ENCODE measurements at regions of chr2 and their contacts with region 1.

Region 1: DNA sequence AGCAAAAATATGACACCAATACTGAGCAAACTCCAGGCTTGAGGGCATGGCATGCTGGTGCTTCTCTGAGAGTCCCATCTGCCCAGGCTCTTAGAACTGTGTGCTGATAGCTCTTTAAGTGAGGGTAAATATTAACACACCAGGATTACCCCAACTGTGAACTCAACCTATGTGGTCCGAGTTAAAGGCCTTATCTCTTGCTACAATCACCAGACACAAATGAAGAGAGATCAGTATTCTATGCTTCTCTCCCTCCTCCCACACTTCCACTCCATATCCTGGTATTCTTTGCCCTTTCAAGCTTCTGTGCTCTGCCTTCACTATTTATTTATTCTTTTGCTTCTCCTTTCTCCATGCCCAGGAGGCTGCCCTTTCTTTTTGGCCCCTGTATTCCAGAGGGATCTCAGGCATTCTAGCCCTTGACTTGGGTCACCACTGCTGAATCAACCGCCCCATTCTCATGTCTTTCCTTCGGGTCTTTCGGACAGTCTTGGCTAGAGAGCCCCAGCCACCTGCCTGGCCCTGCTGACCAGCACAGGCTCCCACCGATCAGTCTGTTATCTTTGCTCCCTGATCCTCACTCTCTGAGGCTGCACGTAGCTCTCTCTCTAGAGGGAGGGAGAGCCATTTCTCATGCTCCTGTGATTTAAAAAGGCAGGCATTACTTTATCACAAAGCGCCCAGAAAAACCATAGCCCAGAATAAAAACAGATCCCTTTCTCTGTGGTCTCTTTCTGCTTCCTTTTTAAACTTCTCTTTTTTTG is 17.2 kb upstream of the HK2 start:
- DNase-seq: no peak
- H3K4me3 ChIP-seq: no peak overlapping the region
- CTCF ChIP-seq: no peak

Region 2: GRCh38 chr2:74764429-74765272 is 52.1 kb before region 1 on chr2:
- in situ Hi-C with region 1: loop called (anchors 5 kb)
- DNase-seq: no peak
- H3K4me3 ChIP-seq: no peak overlapping the region
- CTCF ChIP-seq: no peak